Activated T-helper 2 cell treated with anti-CD3 and anti-CD28 coated beads, Interferon-gamma antibody, Interleukin-2, Interleukin-4, amounts not matched to agents 10 μg/mL and 5 μg/mL and 100 μg/mL, durations not matched to agents 14 hours and 24 hours and 36 hours (primary cell): ENCODE measurements at regions of chr3 and their contacts with region 1.

Region 1: DNA sequence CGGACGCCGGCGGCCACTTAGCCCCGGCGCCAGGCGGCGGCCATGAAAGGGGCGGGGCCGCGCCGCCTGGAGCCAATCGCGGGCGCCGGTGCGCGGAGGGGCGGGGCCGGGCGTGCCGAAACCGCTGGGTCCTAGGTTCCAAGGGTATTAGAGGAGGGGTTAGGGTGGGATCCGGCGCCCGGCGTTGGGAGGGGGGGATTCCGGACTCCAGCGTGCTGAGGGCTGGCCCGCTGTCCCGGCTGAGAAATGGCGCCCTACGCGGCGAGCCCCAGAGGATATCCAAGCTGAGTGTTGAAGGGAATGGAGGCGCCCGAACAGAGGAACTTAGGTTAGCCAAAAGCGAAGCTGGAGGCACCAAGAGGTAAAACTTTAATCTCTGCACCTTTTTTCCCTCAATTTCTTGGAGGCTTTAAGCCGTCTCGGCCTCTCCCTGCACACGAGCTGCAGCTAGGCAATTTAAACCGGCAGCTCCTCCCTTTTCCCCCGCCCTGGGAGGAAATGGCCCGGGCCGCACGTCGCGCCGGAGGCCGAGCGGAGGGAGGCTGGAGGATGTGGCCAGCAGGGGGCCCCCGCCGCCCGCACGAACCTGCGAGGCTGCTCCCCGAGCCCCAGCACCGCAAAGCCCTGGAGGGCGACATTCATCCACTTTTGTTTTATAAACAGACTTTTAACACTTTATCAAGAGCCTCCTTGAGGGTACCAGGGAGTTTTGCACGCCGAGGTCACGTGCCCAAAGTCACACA is at the start of gene XXYLT1:
- DNase-seq: peak; percentile 86
- H3K4me3 Mint-ChIP-seq: peak within 1 kb of the TSS; percentile 86
- H3K27ac Mint-ChIP-seq: peak within 1 kb of the TSS; percentile 84
- H3K4me1 Mint-ChIP-seq: peaks cover 23% of the 10 kb centered on the region
- H3K27me3 Mint-ChIP-seq: no peaks in the 10 kb centered on the region
- total RNA-seq, gene XXYLT1: 15.8 and 16.1 TPM in 2 replicates

Region 2: DNA sequence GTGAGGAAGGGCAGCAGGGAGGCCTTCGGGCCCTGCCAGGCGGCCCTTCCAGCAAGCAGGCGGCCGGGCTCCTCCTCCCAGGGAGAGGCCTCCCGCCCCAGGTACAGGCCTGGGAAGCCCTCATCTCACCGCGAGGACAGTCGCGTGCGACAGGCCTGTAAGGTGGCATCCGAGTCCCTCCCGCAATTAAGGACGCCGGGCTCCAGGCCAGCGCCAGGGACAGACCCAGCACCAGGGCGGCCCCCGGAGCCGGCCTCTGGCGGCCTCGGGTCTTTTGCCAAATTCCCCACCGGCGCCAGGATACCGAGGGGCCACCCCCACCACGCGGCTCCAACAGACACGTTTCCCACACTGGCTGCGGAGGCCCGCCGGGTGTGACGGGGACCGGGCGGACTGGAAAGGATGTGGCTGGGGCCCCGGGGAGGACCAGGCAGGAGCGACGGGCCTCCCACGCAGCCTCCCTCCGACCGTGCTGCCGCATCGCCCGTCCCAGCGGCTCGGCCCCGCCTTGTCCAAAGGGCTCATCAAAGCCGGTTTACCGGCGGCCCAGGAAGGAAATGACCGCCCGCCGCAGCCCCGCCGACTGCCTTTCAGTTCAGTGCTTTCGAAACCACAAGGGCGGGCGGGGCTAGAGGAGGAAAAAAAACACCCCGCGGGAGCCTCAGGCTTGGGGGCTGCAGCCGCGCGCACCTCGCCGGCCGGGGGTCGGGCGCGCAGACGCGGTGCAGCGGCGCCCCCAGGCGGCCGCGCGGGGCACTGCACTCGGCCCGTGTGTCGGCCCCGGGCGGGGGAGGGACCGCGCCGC is 11.6 kb before region 1 on chr3:
- intact Hi-C with region 1: no loop called
- DNase-seq: peak; percentile 80
- H3K4me3 Mint-ChIP-seq: peak overlapping the region; percentile 55
- H3K27ac Mint-ChIP-seq: peak overlapping the region; percentile 38
- H3K4me1 Mint-ChIP-seq: peaks cover 29% of the 10 kb centered on the region
- H3K27me3 Mint-ChIP-seq: no peaks in the 10 kb centered on the region

Region 3: DNA sequence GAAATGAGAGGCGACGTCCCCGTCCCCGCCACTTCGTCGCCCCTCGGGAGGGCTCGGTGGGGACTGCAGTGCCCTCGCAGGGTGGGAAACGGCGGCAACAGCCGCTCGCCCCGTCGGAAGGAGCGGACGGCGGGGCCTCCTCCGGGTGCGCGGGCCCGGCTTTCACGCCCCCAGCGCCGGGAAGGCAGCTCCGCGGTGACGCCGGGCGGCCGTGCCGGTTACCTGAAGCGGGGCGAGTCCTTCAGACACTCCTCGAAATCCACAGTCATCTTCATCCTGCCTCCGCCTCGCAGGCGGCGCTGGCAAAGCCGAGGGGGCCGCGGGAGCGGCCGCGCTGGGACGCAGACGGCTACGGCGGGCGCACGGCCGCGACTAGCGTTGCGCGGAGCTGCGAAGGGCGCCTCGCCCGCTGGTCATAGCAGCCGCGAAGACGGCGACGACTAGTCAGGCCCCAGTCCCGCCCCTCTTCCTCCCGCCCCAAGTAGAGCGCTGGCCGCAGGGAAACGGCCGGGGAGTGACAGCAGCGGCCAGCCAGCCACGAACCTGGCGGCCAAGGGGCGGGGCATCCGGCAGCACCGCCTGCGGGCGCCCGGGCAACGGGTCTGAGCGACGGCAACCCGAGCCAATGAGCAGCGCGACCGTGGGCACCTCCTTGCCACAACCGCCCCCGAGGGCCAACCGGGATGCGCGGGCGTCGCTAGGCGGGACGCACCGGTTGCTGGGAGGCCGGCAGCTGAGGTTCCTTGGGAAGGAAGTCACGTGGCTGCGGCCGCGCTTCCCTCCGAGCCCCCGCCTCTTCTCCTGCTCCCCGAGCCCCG is 171.5 kb after region 1 on chr3 and contains the start of gene ACAP2:
- intact Hi-C with region 1: loop called (anchors 1 kb)
- DNase-seq: peak; percentile 99
- H3K4me3 Mint-ChIP-seq: peak within 1 kb of the TSS; percentile 94
- H3K27ac Mint-ChIP-seq: peak within 1 kb of the TSS; percentile 85
- H3K4me1 Mint-ChIP-seq: peaks cover 31% of the 10 kb centered on the region
- H3K27me3 Mint-ChIP-seq: no peaks in the 10 kb centered on the region
- total RNA-seq, gene ACAP2: 49.8 and 51.5 TPM in 2 replicates

Region 4: DNA sequence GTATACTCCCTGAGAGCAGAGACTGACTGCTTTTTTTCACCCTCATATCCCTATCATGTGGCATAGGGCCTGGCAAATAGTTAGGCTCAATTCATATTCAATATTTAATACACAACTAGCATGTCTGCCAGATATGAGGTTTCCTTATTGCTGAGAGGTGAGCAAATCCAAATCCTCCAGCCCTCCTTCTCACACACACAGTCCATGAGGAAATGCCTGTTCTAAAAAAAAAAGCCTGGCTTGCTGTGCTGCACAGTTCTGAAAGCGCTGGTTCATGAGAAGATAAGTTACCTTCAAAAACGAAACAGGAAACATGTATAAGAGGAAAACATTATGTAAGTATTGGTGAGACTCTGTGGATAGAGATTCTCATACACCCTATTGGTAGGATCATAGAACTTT is 187.0 kb after region 1 on chr3:
- intact Hi-C with region 1: loop called (anchors 5 kb)
- DNase-seq: no peak
- H3K4me3 Mint-ChIP-seq: no peak overlapping the region
- H3K27ac Mint-ChIP-seq: no peak overlapping the region
- H3K4me1 Mint-ChIP-seq: peaks cover 18% of the 10 kb centered on the region
- H3K27me3 Mint-ChIP-seq: peaks cover 2% of the 10 kb centered on the region

Region 5: DNA sequence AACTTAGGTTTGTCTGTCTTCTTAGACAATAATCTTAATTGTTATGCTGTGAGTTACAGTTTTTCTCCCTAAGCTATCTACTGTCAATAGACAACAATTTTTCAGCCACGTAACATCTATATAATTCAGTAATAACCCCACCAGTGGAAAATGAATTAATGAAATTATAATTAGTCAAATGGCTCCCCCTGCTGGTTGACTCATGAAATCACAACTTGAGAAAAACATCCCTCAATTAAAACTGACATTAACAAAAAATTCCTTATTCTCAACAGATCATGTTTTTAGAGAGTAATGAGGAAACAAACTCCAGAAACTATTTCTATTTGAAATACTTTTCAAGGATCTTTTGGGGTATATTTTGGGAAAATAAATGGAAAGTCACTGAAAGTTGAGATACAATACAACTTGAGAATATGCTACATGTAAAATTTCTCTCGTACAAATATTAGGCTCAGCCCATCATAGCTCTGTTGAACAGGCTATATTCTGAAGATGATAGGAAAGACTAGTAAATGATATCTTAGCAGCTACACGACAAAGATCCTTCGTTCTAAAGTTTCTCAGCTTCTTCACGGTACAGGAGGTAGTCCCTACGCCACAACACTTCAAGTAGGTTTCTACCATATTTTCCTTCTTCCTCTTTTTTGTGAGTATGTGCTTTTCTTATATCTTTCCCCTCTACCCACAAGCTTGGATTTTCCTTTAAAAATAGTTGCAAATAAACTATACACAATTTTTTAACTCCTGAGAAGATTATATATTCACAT is 251.2 kb after region 1 on chr3:
- intact Hi-C with region 1: loop called (anchors 1 kb)
- DNase-seq: no peak
- H3K4me3 Mint-ChIP-seq: no peak overlapping the region
- H3K27ac Mint-ChIP-seq: no peak overlapping the region
- H3K4me1 Mint-ChIP-seq: peaks cover 35% of the 10 kb centered on the region
- H3K27me3 Mint-ChIP-seq: no peaks in the 10 kb centered on the region

Region 6: DNA sequence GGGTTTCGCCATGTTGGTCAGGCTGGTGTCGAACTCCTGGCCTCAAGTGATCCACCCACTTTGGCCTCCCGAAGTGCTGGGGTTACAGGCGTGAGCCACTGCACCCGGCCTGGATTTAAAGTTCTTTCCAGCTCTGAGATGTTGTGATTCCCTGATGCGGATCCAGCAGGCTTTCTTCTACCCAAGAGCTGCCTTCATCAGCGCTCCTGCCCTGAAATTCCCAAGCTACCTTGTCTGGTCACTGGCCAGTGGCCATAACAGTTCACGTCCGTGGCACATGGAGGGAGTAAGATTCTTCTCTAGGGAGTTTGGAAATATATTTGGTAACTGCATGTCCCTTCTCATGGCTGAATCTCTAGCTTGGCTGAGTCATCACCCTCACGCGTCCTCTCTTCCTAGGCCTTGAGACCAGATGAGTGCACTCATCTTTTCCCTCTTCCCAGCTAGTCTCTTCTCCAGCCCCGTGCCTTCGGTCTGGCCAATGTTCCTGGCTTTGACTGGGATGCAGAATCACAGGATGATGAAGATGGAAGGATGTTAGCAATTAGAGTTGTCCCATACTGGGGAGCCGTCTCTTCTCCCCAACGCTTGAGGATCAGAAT is 342.3 kb after region 1 on chr3:
- intact Hi-C with region 1: no loop called
- DNase-seq: no peak
- H3K4me3 Mint-ChIP-seq: no peak overlapping the region
- H3K27ac Mint-ChIP-seq: no peak overlapping the region
- H3K4me1 Mint-ChIP-seq: peaks cover 23% of the 10 kb centered on the region
- H3K27me3 Mint-ChIP-seq: no peaks in the 10 kb centered on the region